Calu3 (cell line): ENCODE measurements at regions of chrX and their contacts with region 1.

Region 1: GRCh38 chrX:103686199-103687072 is at the start of gene MORF4L2:
- DNase-seq: peak; percentile 88
- H3K4me3 Mint-ChIP-seq: no peak within 1 kb of the TSS
- H3K27ac Mint-ChIP-seq: no peak within 1 kb of the TSS
- H3K4me1 Mint-ChIP-seq: peaks cover 7% of the 10 kb centered on the region
- H3K27me3 Mint-ChIP-seq: no peaks in the 10 kb centered on the region
- CTCF ChIP-seq: no peak
- total RNA-seq, gene MORF4L2: 388 and 438 TPM in 2 replicates

Region 2: GRCh38 chrX:103533511-103534216 is 152.8 kb before region 1 on chrX:
- CTCF ChIA-PET with region 1: no interaction called
- intact Hi-C with region 1: loop called (anchors 5 kb)
- DNase-seq: peak; percentile 73
- H3K4me3 Mint-ChIP-seq: peak overlapping the region; percentile 69
- H3K27ac Mint-ChIP-seq: no peak overlapping the region
- H3K4me1 Mint-ChIP-seq: no peaks in the 10 kb centered on the region
- H3K27me3 Mint-ChIP-seq: no peaks in the 10 kb centered on the region
- CTCF ChIP-seq: peak; percentile 66

Region 3: GRCh38 chrX:103573208-103573607 is 113.2 kb before region 1 on chrX:
- CTCF ChIA-PET with region 1: no interaction called
- intact Hi-C with region 1: no loop called
- DNase-seq: no peak
- H3K4me3 Mint-ChIP-seq: no peak overlapping the region
- H3K27ac Mint-ChIP-seq: no peak overlapping the region
- H3K4me1 Mint-ChIP-seq: no peaks in the 10 kb centered on the region
- H3K27me3 Mint-ChIP-seq: no peaks in the 10 kb centered on the region
- CTCF ChIP-seq: no peak

Region 4: DNA sequence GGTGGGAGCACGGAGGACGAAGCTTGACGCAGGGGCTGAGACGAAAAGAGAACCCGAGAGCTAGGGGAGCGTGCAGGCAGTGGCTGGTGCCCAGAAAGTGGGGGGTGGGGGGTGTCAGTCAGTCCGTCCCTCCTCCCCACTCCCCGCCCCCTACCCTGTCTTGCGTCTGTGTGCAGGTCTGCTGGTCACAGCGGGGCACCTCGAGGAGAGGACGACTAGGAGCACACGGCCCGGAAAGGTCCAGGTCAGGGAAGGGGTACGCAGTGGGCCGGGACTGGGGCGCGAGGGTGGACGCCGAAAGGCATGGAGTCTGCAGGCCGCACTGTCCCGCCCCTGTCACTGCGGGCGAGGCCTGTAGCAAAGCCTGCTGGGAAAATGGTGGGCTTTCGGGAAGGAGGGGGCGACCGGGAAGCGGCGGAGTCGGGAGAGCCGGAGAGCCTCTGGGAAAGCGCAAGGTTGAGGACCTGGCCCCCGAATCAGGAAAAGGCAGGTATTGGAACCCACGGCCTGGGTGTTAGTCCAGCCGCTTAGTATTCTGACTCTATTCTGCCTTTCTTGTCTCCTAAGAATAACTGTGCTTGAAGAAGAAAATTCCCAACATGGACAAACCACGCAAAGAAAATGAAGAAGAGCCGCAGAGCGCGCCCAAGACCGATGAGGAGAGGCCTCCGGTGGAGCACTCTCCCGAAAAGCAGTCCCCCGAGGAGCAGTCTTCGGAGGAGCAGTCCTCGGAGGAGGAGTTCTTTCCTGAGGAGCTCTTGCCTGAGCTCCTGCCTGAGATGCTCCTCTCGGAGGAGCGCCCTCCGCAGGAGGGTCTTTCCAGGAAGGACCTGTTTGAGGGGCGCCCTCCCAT is 56.9 kb before region 1 on chrX:
- CTCF ChIA-PET with region 1: interaction called, 3 read pairs
- intact Hi-C with region 1: loop called (anchors 5 kb)
- DNase-seq: peak; percentile 65
- H3K4me3 Mint-ChIP-seq: peak overlapping the region; percentile 97
- H3K27ac Mint-ChIP-seq: peak overlapping the region; percentile 48
- H3K4me1 Mint-ChIP-seq: peaks cover 9% of the 10 kb centered on the region
- H3K27me3 Mint-ChIP-seq: no peaks in the 10 kb centered on the region
- CTCF ChIP-seq: peak; percentile 43

Region 5: GRCh38 chrX:103656632-103657031 is 29.8 kb before region 1 on chrX:
- CTCF ChIA-PET with region 1: interaction called, 3 read pairs
- intact Hi-C with region 1: loop called (anchors 2 kb)
- DNase-seq: peak; percentile 51
- H3K4me3 Mint-ChIP-seq: no peak overlapping the region
- H3K27ac Mint-ChIP-seq: peak overlapping the region; percentile 52
- H3K4me1 Mint-ChIP-seq: peaks cover 32% of the 10 kb centered on the region
- H3K27me3 Mint-ChIP-seq: no peaks in the 10 kb centered on the region
- CTCF ChIP-seq: no peak

Region 6: GRCh38 chrX:103774070-103774642 is 87.7 kb after region 1 on chrX:
- CTCF ChIA-PET with region 1: no interaction called
- intact Hi-C with region 1: loop called (anchors 1 kb)
- DNase-seq: peak; percentile 6
- H3K4me3 Mint-ChIP-seq: no peak overlapping the region
- H3K27ac Mint-ChIP-seq: no peak overlapping the region
- H3K4me1 Mint-ChIP-seq: no peaks in the 10 kb centered on the region
- H3K27me3 Mint-ChIP-seq: peaks cover 76% of the 10 kb centered on the region
- CTCF ChIP-seq: peak; percentile 10

Region 7: DNA sequence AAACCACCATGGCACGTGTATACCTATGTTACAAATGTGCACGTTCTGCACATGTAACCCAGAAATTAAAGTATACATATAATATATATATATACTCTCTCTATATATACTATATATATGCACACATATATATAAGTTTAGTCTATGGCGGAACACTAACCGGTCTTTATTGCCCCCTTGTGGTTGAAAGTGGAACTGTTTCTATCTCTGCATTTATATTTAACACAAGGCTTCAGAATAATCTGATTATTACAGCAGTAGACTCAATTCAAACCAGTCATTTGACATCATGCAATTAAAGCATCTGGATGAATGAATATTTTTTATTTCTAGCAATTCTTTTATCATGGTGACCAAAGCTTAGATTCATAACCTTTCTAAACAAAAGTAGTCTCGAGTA is 131.1 kb after region 1 on chrX:
- CTCF ChIA-PET with region 1: no interaction called
- intact Hi-C with region 1: loop called (anchors 2 kb)
- DNase-seq: peak; percentile 43
- H3K4me3 Mint-ChIP-seq: no peak overlapping the region
- H3K27ac Mint-ChIP-seq: no peak overlapping the region
- H3K4me1 Mint-ChIP-seq: no peaks in the 10 kb centered on the region
- H3K27me3 Mint-ChIP-seq: peaks cover 37% of the 10 kb centered on the region
- CTCF ChIP-seq: peak; percentile 32